Activated CD4-positive, alpha-beta T cell treated with anti-CD3 and anti-CD28 coated beads for 36 hours (primary cell): ENCODE measurements at regions of chr2 and their contacts with region 1.

Region 1: GRCh38 chr2:27683390-27684071 is 19.8 kb downstream of the SLC4A1AP start:
- DNase-seq: peak; percentile 93
- ATAC-seq: peak; percentile 73
- H3K4me3 Mint-ChIP-seq: no peak overlapping the region
- H3K27ac Mint-ChIP-seq: peak overlapping the region; percentile 92
- H3K4me1 Mint-ChIP-seq: peaks cover 31% of the 10 kb centered on the region
- H3K27me3 Mint-ChIP-seq: no peaks in the 10 kb centered on the region

Region 2: GRCh38 chr2:27370026-27370815 is 313.3 kb before region 1 on chr2 and contains the starts of genes EIF2B4 and SNX17:
- CTCF ChIA-PET with region 1: interaction called, 10 read pairs
- POLR2A ChIA-PET with region 1: no interaction called
- intact Hi-C with region 1: loop called in 1 of 2 experiments (anchors 2 kb)
- DNase-seq: peak; percentile 99
- ATAC-seq: peak; percentile 95
- H3K4me3 Mint-ChIP-seq: peak within 1 kb of the TSS; percentile 90
- H3K27ac Mint-ChIP-seq: peak within 1 kb of the TSS; percentile 95
- H3K4me1 Mint-ChIP-seq: peaks cover 39% of the 10 kb centered on the region
- H3K27me3 Mint-ChIP-seq: no peaks in the 10 kb centered on the region
- total RNA-seq, gene EIF2B4: 31.0 to 39.2 TPM
- total RNA-seq, gene SNX17: 63.9 to 82.1 TPM

Region 3: DNA sequence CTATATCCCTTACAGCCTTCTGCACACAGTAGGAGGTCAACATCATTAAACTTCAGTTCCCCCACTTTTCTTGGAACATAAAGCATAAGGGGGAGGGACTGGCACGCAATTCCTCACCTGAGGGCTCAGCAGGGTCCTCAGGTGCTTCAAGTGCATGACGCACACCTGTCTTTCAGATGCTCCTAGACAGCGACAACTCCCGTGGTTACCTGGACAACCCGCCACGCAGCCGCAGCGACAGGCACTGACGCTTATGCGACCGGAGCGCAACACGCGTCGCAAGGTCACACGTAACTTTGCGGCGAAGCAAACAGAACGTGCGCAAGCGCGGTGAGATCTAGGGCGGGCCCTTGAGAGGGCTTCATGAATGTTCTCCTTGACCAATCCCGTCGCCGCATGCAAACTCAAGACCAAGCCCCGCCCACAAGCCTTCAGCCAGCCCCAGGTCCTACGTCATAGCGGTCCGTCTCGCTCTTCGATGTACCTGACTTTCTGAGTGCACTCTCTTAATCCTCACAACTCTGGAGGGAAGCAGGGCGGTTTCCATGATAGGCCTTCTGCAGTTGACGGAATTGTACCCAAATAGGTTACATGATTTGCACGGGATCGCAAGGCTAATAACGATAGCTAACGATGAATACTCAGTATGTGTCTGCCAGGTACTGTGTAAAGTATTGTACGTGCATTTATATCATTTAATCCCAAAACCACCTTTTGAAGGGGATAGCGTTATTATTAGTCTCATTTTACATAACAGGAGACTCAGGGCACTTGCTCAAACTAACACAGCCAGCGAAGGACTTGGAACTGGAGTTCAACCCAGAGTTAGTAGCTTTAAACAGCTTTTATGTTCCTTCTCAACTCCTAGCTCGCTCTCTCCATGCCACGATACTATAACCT is 193.8 kb before region 1 on chr2 and contains the start of gene IFT172:
- CTCF ChIA-PET with region 1: interaction called, 8 read pairs
- POLR2A ChIA-PET with region 1: no interaction called
- intact Hi-C with region 1: loop called in 1 of 2 experiments (anchors 1 kb)
- DNase-seq: peak; percentile 100
- ATAC-seq: peak; percentile 97
- H3K4me3 Mint-ChIP-seq: peak within 1 kb of the TSS; percentile 75
- H3K27ac Mint-ChIP-seq: peak within 1 kb of the TSS; percentile 63
- H3K4me1 Mint-ChIP-seq: peaks cover 23% of the 10 kb centered on the region
- H3K27me3 Mint-ChIP-seq: peaks cover 11% of the 10 kb centered on the region
- total RNA-seq, gene IFT172: 8.7 TPM

Region 4: GRCh38 chr2:27638037-27638637 is 45.4 kb before region 1 on chr2:
- CTCF ChIA-PET with region 1: interaction called, 30 read pairs
- POLR2A ChIA-PET with region 1: interaction called, 9 read pairs
- intact Hi-C with region 1: loop called (anchors 1 kb)
- DNase-seq: peak; percentile 31
- ATAC-seq: peak; percentile 88
- H3K4me3 Mint-ChIP-seq: peak overlapping the region; percentile 50
- H3K27ac Mint-ChIP-seq: peak overlapping the region; percentile 95
- H3K4me1 Mint-ChIP-seq: peaks cover 38% of the 10 kb centered on the region
- H3K27me3 Mint-ChIP-seq: no peaks in the 10 kb centered on the region

Region 5: GRCh38 chr2:27672723-27673486 is 10.6 kb before region 1 on chr2:
- CTCF ChIA-PET with region 1: interaction called, 16 read pairs
- POLR2A ChIA-PET with region 1: no interaction called
- intact Hi-C with region 1: no loop called
- DNase-seq: no peak
- ATAC-seq: no peak
- H3K4me3 Mint-ChIP-seq: no peak overlapping the region
- H3K27ac Mint-ChIP-seq: no peak overlapping the region
- H3K4me1 Mint-ChIP-seq: peaks cover 11% of the 10 kb centered on the region
- H3K27me3 Mint-ChIP-seq: no peaks in the 10 kb centered on the region

Region 6: DNA sequence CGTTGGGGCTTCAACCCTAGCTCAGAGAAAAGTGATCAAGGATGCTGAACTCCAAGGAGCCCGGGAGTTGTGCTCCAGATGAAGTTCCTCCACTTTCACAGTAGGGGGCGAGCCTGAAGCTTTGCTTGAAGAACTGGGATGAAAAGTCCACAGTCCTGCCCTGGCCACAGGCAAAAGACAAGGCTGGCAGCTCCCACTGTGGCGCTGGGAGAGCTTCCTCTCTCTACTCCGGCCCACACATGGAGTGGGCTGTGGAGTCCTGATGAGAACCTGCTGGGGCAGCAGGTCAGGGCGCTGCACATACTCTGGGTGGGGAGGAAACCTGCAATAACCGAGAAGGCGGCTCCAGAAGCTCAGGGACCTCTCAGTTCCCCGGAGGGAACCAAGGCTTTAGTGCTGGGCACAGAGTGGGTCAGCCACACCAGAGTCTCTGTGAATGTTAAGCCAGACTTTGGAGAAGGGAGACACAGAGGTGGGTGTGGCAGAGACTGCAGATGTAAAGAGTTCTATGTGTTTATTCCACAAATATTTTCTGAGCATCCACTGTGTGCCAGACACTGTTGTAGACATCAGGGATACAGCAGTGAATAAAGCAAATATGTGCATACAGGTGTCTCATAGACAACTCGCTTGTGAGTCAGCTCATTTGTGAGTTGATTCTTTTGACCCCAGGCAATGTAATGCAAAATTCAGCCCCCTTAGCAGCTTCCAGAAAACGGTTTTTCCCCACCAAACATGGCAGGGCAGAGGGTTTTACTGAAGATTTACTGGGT is 40.0 kb after region 1 on chr2:
- CTCF ChIA-PET with region 1: interaction called, 11 read pairs
- POLR2A ChIA-PET with region 1: interaction called, 4 read pairs
- intact Hi-C with region 1: no loop called
- DNase-seq: peak; percentile 57
- ATAC-seq: no peak
- H3K4me3 Mint-ChIP-seq: no peak overlapping the region
- H3K27ac Mint-ChIP-seq: no peak overlapping the region
- H3K4me1 Mint-ChIP-seq: peaks cover 30% of the 10 kb centered on the region
- H3K27me3 Mint-ChIP-seq: no peaks in the 10 kb centered on the region